PC-9 (cell line): ENCODE measurements at regions of chr18 and their contacts with region 1.

Region 1: GRCh38 chr18:25058521-25058920 is 293.4 kb downstream of the ZNF521 start:
- DNase-seq: no peak
- H3K4me3 ChIP-seq: no peak overlapping the region
- H3K27ac ChIP-seq: no peak overlapping the region
- H3K4me1 ChIP-seq: no peaks in the 10 kb centered on the region
- H3K27me3 ChIP-seq: no peaks in the 10 kb centered on the region
- CTCF ChIP-seq: no peak

Region 2: GRCh38 chr18:24721388-24721787 is 337.1 kb before region 1 on chr18:
- CTCF ChIA-PET with region 1: no interaction called
- POLR2A ChIA-PET with region 1: no interaction called
- intact Hi-C with region 1: no loop called
- DNase-seq: no peak
- H3K4me3 ChIP-seq: no peak overlapping the region
- H3K27ac ChIP-seq: no peak overlapping the region
- H3K4me1 ChIP-seq: no peaks in the 10 kb centered on the region
- H3K27me3 ChIP-seq: no peaks in the 10 kb centered on the region
- CTCF ChIP-seq: no peak

Region 3: GRCh38 chr18:24995056-24995455 is 63.5 kb before region 1 on chr18:
- CTCF ChIA-PET with region 1: no interaction called
- POLR2A ChIA-PET with region 1: no interaction called
- intact Hi-C with region 1: no loop called
- DNase-seq: no peak
- H3K4me3 ChIP-seq: no peak overlapping the region
- H3K27ac ChIP-seq: no peak overlapping the region
- H3K4me1 ChIP-seq: no peaks in the 10 kb centered on the region
- H3K27me3 ChIP-seq: no peaks in the 10 kb centered on the region
- CTCF ChIP-seq: no peak

Region 4: DNA sequence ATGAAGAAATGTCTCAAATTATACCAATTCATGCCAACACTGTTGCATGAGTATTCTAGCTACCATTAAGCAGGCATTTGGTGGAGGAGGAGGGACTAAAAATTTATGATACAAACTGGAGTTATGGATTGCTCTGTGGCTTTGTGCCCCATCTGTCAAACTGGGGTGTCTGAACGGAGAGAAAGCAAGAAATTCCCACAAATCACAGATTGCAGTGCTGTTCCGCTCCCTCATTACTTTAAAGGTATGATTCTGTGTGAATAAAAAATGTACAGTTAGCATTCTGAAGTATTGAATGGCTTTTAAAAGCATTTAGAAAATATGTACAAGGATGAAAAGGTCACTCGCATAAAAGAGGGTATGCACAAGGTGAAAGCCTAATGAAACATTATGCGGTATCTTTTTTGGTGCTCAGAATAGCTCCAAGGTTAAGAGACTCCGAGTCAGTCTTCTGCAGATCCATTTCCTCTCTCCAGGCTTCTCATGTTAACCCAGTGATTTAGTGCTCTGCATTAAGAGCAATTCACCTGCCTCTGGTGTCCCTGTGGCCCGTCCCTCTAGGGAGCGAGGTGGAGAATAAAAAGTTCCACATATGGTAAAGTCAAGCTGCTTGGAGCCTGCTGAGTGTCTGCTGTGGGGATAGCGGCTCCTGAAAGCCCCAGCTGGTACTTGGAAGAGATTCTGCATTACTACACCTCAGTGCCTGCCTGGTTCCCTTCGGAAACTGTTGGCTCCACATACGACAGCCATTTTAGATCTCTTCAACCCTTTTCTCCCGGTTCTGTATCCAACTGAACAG is 109.3 kb after region 1 on chr18:
- CTCF ChIA-PET with region 1: no interaction called
- POLR2A ChIA-PET with region 1: no interaction called
- intact Hi-C with region 1: no loop called
- DNase-seq: no peak
- H3K4me3 ChIP-seq: no peak overlapping the region
- H3K27ac ChIP-seq: no peak overlapping the region
- H3K4me1 ChIP-seq: no peaks in the 10 kb centered on the region
- H3K27me3 ChIP-seq: peaks cover 8% of the 10 kb centered on the region; the same call in 1 of the 2 replicates
- CTCF ChIP-seq: no peak

Region 5: GRCh38 chr18:26322890-26323653 is 1264.6 kb after region 1 on chr18:
- CTCF ChIA-PET with region 1: no interaction called
- POLR2A ChIA-PET with region 1: interaction called, 17 read pairs
- intact Hi-C with region 1: no loop called
- DNase-seq: no peak
- H3K4me3 ChIP-seq: no peak overlapping the region
- H3K27ac ChIP-seq: no peak overlapping the region
- H3K4me1 ChIP-seq: peaks cover 11% of the 10 kb centered on the region; the same call in 1 of the 2 replicates
- H3K27me3 ChIP-seq: no peaks in the 10 kb centered on the region
- CTCF ChIP-seq: no peak